Naive thymus-derived CD4-positive, alpha-beta T cell (primary cell): ENCODE measurements at regions of chr6 and their contacts with region 1.

Region 1: DNA sequence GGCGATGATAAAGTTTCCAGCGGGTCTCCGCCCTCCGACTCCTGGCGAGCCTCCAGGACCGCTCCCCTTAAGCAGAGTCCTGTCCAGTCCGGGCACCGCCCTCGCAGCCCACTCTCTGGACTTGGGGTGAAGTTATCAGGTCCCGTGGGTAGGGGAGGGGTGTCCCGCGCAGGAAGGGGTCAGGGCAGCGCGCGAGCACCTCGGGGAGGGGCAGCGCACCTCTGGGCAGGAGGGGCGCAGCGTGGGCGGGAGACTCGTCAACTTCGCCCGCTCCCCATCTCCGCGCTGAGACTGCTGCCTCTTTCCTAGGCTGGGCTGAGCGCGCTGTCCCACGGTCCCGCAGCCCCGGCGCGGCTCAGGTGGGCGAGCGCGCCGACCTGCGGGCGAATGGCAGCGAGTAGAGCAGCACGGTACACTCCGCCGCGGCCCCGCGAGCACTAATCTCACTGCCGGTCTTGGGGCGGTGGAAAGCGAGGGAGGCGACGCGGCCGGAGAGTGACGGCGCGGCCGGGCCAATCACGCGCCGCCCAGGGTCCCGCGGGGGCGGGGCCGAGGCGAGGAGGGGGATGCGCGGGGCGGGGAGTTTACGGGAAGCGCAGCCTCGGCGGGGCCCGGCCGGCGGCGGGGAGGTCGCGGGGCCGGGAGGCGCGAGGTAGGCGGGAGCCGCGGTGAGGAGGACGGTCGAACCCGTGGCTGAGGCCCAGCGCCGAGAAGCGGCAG is at the start of gene MAN1A1:
- DNase-seq: peak; percentile 79 to 96 (median 90)
- ATAC-seq: peak; percentile 94
- H3K4me3 ChIP-seq: peak within 1 kb of the TSS; percentile 85
- H3K4me3 Mint-ChIP-seq: peak within 1 kb of the TSS; percentile 82 to 99 (median 93)
- H3K27ac ChIP-seq: peak within 1 kb of the TSS; percentile 83
- H3K27ac Mint-ChIP-seq: peak within 1 kb of the TSS; percentile 77 to 96 (median 83)
- H3K4me1 ChIP-seq: peaks cover 9% of the 10 kb centered on the region in 2 donors
- H3K4me1 Mint-ChIP-seq: peaks cover 8 to 60% (median 53%) of the 10 kb centered on the region in 7 donors
- H3K27me3 ChIP-seq: no peaks in the 10 kb centered on the region
- H3K27me3 Mint-ChIP-seq: no peaks in the 10 kb centered on the region
- total RNA-seq, gene MAN1A1: 8.3 to 22.3 (median 8.5) TPM

Region 2: DNA sequence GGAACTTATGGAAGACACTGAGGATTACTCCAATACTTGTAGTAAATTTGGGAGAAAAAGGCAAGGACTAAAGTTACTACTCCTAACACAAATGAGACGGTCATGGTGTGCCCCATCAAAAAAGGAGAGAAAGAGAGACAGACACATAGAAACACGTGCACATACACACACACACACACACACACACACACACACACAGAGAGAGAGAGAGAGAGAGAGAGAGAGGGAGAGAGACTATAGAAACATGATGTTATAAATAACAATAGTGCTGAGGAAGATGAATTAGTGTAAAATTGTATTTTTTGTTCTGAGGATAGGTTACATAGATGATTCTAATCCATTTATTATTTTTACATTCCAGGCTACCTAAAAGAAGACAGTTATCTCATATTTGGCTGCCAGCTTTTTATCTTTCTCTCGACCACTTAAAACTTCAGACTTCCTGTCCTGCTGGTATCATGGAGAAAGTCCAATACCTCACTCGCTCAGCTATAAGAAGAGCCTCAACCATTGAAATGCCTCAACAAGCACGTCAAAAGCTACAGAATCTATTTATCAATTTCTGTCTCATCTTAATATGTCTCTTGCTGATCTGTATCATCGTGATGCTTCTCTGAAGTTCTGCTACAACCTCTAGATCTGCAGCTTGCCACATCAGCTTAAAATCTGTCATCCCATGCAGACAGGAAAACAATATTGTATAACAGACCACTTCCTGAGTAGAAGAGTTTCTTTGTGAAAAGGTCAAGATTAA is 790.8 kb before region 1 on chr6:
- CTCF ChIA-PET with region 1: no interaction called
- POLR2A ChIA-PET with region 1: no interaction called
- intact Hi-C with region 1: loop called in 1 of 2 experiments (anchors 5 kb)
- DNase-seq: peak in 7 of 9 donors; percentile 58 to 81 (median 72)
- ATAC-seq: peak; percentile 95
- H3K4me3 ChIP-seq: peak overlapping the region; percentile 15
- H3K4me3 Mint-ChIP-seq: peak overlapping the region; percentile 39 to 90 (median 81)
- H3K27ac ChIP-seq: peak overlapping the region; percentile 74
- H3K27ac Mint-ChIP-seq: peak overlapping the region; percentile 93 to 99 (median 96)
- H3K4me1 ChIP-seq: peaks cover 19 to 25% of the 10 kb centered on the region in 2 donors
- H3K4me1 Mint-ChIP-seq: peaks cover 17 to 71% (median 50%) of the 10 kb centered on the region in 7 donors
- H3K27me3 ChIP-seq: no peaks in the 10 kb centered on the region
- H3K27me3 Mint-ChIP-seq: peaks cover 0 to 2% (median 0%) of the 10 kb centered on the region in 5 donors

Region 3: GRCh38 chr6:118893807-118894424 is 455.6 kb before region 1 on chr6 and contains the start of gene ASF1A:
- CTCF ChIA-PET with region 1: no interaction called
- POLR2A ChIA-PET with region 1: interaction called, 3 read pairs
- intact Hi-C with region 1: loop called (anchors 1 to 2 kb)
- DNase-seq: peak; percentile 94 to 98 (median 97)
- ATAC-seq: peak; percentile 90
- H3K4me3 ChIP-seq: peak within 1 kb of the TSS; percentile 77
- H3K4me3 Mint-ChIP-seq: peak within 1 kb of the TSS; percentile 88 to 97 (median 94)
- H3K27ac ChIP-seq: peak within 1 kb of the TSS; percentile 91
- H3K27ac Mint-ChIP-seq: peak within 1 kb of the TSS; percentile 96 to 99 (median 99)
- H3K4me1 ChIP-seq: peaks cover 47 to 52% of the 10 kb centered on the region in 2 donors
- H3K4me1 Mint-ChIP-seq: peaks cover 39 to 76% (median 69%) of the 10 kb centered on the region in 7 donors
- H3K27me3 ChIP-seq: no peaks in the 10 kb centered on the region
- H3K27me3 Mint-ChIP-seq: peaks cover 0 to 2% (median 0%) of the 10 kb centered on the region in 5 donors
- total RNA-seq, gene ASF1A: 16.5 to 63.9 (median 35.7) TPM

Region 4: DNA sequence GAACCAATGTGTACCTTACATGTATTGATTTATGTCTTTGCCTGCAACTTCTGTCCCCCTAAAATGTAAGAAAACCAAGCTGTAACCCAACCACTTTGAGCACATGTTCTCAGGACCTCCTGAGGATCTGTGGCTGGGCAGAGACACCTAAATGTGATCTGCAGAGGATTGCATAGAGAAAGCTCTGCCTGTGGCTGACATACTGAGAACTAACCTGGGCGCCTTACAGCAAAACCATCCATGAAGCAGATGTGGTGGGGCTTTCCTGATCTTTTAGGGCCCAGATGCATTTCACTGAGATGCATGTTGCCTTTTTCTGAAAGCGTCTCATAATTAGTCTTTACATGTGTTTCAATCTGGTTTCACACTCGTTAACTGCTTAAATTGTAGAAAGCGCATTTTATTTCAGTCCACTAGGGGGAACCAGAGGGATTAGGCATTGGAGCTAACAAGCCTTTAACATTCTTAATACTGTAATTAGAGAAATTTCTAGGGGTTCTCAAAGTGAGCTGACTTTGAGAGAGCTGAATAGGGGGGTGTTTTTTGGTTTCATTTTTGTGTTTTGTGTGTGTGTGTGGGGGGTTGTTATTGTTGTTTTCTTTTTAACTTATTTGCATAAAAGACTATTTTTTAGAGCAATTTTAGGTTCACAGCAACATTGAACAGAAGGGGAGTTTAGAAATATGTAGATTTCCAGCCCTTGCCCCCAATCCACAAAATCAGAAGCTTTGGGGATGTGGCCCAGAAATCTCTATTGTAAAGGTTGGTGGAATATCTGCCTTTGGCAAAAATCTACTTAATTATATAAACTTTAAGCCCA is 220.1 kb before region 1 on chr6:
- CTCF ChIA-PET with region 1: no interaction called
- POLR2A ChIA-PET with region 1: interaction called, 3 read pairs
- intact Hi-C with region 1: loop called (anchors 2 to 5 kb)
- DNase-seq: peak in 7 of 9 donors; percentile 18 to 63 (median 51)
- ATAC-seq: peak; percentile 80
- H3K4me3 ChIP-seq: no peak overlapping the region
- H3K4me3 Mint-ChIP-seq: peak overlapping the region in 1 of 10 donors; percentile 10
- H3K27ac ChIP-seq: no peak overlapping the region
- H3K27ac Mint-ChIP-seq: no peak overlapping the region
- H3K4me1 ChIP-seq: peaks cover 0 to 4% of the 10 kb centered on the region in 2 donors
- H3K4me1 Mint-ChIP-seq: peaks cover 0 to 8% (median 0%) of the 10 kb centered on the region in 7 donors
- H3K27me3 ChIP-seq: no peaks in the 10 kb centered on the region
- H3K27me3 Mint-ChIP-seq: peaks cover 0 to 17% (median 0%) of the 10 kb centered on the region in 5 donors

Region 5: DNA sequence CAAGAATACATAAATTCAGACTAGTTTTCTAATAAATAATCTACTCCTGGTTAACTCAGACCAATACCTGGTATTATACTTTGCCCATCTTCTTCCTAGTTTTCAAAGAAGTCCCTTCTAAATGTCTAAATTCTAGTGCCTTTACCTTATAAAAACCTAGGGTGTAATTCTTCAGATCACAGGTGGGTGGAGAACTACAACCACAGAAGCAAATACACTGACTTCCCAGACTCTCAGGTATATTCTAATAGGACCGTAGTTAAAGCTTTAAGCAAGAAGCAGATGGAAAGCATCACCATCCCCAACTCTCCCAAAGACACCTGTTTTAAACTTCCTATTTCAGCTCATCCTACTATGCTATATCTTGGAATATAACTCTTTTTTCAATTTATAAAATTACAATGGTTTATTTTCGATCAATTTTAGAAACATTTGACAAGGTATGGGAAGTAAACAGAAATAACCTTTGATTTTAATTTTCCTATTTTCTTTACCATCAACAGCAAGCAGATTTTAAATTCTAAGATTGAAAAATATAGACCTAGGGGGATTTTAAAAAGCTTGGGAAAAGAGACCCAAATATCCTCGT is 15.7 kb before region 1 on chr6:
- CTCF ChIA-PET with region 1: interaction called, 7 read pairs
- POLR2A ChIA-PET with region 1: interaction called, 6 read pairs
- intact Hi-C with region 1: loop called (anchors 1 to 2 kb)
- DNase-seq: peak in 6 of 9 donors; percentile 24 to 56 (median 42)
- ATAC-seq: peak; percentile 78
- H3K4me3 ChIP-seq: no peak overlapping the region
- H3K4me3 Mint-ChIP-seq: no peak overlapping the region
- H3K27ac ChIP-seq: no peak overlapping the region
- H3K27ac Mint-ChIP-seq: no peak overlapping the region
- H3K4me1 ChIP-seq: no peaks in the 10 kb centered on the region
- H3K4me1 Mint-ChIP-seq: peaks cover 0 to 53% (median 11%) of the 10 kb centered on the region in 7 donors
- H3K27me3 ChIP-seq: no peaks in the 10 kb centered on the region
- H3K27me3 Mint-ChIP-seq: no peaks in the 10 kb centered on the region

Region 6: DNA sequence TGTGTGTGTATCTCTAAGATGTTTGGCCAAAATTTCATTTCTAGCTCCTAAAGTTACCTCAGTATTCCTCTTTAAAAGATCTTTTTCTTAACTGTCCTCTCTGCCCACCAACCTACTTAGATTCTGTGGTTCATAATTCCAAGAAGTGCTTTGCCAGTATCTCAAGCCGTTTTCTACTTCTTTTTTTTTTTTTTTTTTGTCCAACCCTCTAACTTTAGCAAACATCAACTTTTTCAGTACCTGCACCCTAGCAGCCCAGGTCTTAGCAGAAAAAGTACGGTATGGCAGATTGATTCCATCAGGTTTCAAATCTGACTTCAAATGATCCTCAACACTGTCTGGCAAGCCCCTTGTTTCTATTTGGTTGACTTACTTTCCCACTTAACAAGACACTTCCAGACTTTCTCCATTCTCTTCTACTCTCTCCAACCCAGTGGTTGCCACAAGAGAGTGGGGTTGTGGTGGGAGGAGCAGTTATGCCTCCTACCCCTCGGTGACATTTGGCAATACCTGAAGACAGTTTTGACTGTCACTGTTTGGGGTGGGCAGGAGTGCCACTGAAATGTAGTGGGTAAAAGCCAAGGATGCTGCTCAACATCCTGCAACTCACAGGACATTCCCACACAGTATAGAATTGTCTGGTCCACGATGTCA is 10.9 kb after region 1 on chr6:
- CTCF ChIA-PET with region 1: no interaction called
- POLR2A ChIA-PET with region 1: no interaction called
- intact Hi-C with region 1: no loop called
- DNase-seq: no peak
- ATAC-seq: no peak
- H3K4me3 ChIP-seq: no peak overlapping the region
- H3K4me3 Mint-ChIP-seq: no peak overlapping the region
- H3K27ac ChIP-seq: no peak overlapping the region
- H3K27ac Mint-ChIP-seq: no peak overlapping the region
- H3K4me1 ChIP-seq: no peaks in the 10 kb centered on the region
- H3K4me1 Mint-ChIP-seq: peaks cover 0 to 12% (median 3%) of the 10 kb centered on the region in 7 donors
- H3K27me3 ChIP-seq: no peaks in the 10 kb centered on the region
- H3K27me3 Mint-ChIP-seq: no peaks in the 10 kb centered on the region

Region 7: DNA sequence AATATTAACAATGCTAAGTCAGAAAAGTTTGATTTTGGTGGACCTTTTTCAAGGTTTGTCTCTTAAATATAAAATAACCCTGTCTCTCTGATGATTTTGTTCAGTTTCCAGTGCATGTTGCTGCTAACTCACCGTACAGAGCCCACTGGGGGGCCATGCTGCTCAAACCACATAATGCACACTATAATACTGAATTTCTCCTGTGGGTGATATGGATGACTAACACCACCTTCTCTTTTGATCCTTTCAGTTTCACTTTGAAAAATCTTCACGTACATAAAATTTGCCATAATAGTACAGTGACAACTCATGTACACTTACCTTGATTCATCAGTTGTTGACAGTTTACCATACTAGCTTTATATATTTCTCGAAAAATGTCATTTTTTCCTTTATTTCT is 506.7 kb after region 1 on chr6:
- CTCF ChIA-PET with region 1: no interaction called
- POLR2A ChIA-PET with region 1: no interaction called
- intact Hi-C with region 1: loop called in 1 of 2 experiments (anchors 2 kb)
- DNase-seq: peak in 1 of 9 donors; percentile 8
- ATAC-seq: peak; percentile 63
- H3K4me3 ChIP-seq: peak overlapping the region; percentile 40
- H3K4me3 Mint-ChIP-seq: peak overlapping the region; percentile 54 to 84 (median 72)
- H3K27ac ChIP-seq: no peak overlapping the region
- H3K27ac Mint-ChIP-seq: peak overlapping the region in 2 of 9 donors; percentile 10 to 13
- H3K4me1 ChIP-seq: no peaks in the 10 kb centered on the region
- H3K4me1 Mint-ChIP-seq: peaks cover 4 to 12% (median 10%) of the 10 kb centered on the region in 7 donors
- H3K27me3 ChIP-seq: no peaks in the 10 kb centered on the region
- H3K27me3 Mint-ChIP-seq: peaks cover 0 to 8% (median 0%) of the 10 kb centered on the region in 5 donors